ENCODE measurements at regions of chr11 and their contacts with region 1.

Region 1: GRCh38 chr11:9888938-9889337 is 225.1 kb downstream of the SWAP70 start:
- DNase-seq: no peak
- H3K4me3 ChIP-seq: no peak overlapping the region
- H3K27ac ChIP-seq: no peak overlapping the region
- H3K4me1 ChIP-seq: no peaks in the 10 kb centered on the region
- H3K27me3 ChIP-seq: no peaks in the 10 kb centered on the region
- CTCF ChIP-seq: no peak
- POLR2A ChIP-seq: no peak

Region 2: GRCh38 chr11:9752091-9752490 is 136.8 kb before region 1 on chr11:
- CTCF ChIA-PET with region 1: no interaction called
- POLR2A ChIA-PET with region 1: no interaction called
- dilution Hi-C with region 1: no loop called
- intact Hi-C with region 1: no loop called
- DNase-seq: no peak
- H3K4me3 ChIP-seq: no peak overlapping the region
- H3K27ac ChIP-seq: no peak overlapping the region
- H3K4me1 ChIP-seq: peaks cover 30% of the 10 kb centered on the region
- H3K27me3 ChIP-seq: no peaks in the 10 kb centered on the region
- CTCF ChIP-seq: no peak
- POLR2A ChIP-seq: no peak

Region 3: DNA sequence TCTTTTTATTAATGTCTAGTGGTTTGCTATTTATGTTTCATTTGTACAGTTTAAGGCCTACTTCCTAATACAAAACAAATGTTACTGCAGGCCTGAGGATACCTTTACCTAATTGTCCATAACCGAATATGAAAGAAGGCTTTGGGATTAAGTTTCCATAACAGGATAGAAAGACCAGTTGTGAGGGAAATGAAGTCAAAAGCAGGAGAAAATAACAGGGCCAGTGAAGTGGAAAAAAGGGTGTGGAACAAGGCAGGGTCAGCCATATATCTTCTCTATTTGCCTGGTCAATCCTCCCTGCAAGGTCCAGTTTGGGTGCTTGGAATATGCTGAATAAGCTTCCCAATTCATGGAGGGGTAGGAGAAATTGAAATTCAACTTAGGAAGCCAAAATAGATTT is 13.5 kb before region 1 on chr11:
- CTCF ChIA-PET with region 1: interaction called, 6 read pairs
- POLR2A ChIA-PET with region 1: interaction called, 3 read pairs
- dilution Hi-C with region 1: no loop called
- intact Hi-C with region 1: loop called (anchors 1 kb)
- DNase-seq: no peak
- H3K4me3 ChIP-seq: no peak overlapping the region
- H3K27ac ChIP-seq: no peak overlapping the region
- H3K4me1 ChIP-seq: no peaks in the 10 kb centered on the region
- H3K27me3 ChIP-seq: no peaks in the 10 kb centered on the region
- CTCF ChIP-seq: no peak
- POLR2A ChIP-seq: no peak